ENCODE measurements at regions of chr2 and their contacts with region 1.

Region 1: GRCh38 chr2:191625016-191625415 is 52.9 kb upstream of the NABP1 start:
- DNase-seq: no peak
- ATAC-seq: no peak
- H3K4me3 ChIP-seq: no peak overlapping the region
- H3K27ac ChIP-seq: no peak overlapping the region
- H3K4me1 ChIP-seq: peaks cover 12% of the 10 kb centered on the region
- H3K27me3 ChIP-seq: no peaks in the 10 kb centered on the region
- CTCF ChIP-seq: no peak
- POLR2A ChIP-seq: no peak
- RAD21 ChIP-seq: no peak

Region 2: GRCh38 chr2:191582355-191582754 is 42.7 kb before region 1 on chr2:
- CTCF ChIA-PET with region 1: no interaction called
- POLR2A ChIA-PET with region 1: no interaction called
- dilution Hi-C with region 1: no loop called
- in situ Hi-C with region 1: no loop called
- intact Hi-C with region 1: loop called (anchors 5 kb)
- DNase-seq: peak; percentile 87
- ATAC-seq: peak; percentile 89
- H3K4me3 ChIP-seq: no peak overlapping the region
- H3K27ac ChIP-seq: 0 out of 2 replicates have a peak overlapping the region, but pooled peaks have one; percentile 32
- H3K4me1 ChIP-seq: no peaks in the 10 kb centered on the region
- H3K27me3 ChIP-seq: no peaks in the 10 kb centered on the region
- CTCF ChIP-seq: no peak
- POLR2A ChIP-seq: no peak
- RAD21 ChIP-seq: no peak